CD4-positive, alpha-beta T cell (primary cell): ENCODE measurements at regions of chr4 and their contacts with region 1.

Region 1: GRCh38 chr4:88823058-88823919 is 125.7 kb upstream of the NAP1L5 start:
- DNase-seq: peak; percentile 36 to 94 (median 61)
- ATAC-seq: peak; percentile 92
- H3K4me3 ChIP-seq: peak overlapping the region; percentile 61
- H3K4me3 Mint-ChIP-seq: peak overlapping the region; percentile 91
- H3K27ac ChIP-seq: peak overlapping the region; percentile 78 to 90
- H3K27ac Mint-ChIP-seq: peak overlapping the region; percentile 97
- H3K4me1 ChIP-seq: peaks cover 6% of the 10 kb centered on the region
- H3K4me1 Mint-ChIP-seq: peaks cover 50% of the 10 kb centered on the region
- H3K27me3 ChIP-seq: no peaks in the 10 kb centered on the region
- H3K27me3 Mint-ChIP-seq: no peaks in the 10 kb centered on the region
- CTCF ChIP-seq: no peak

Region 2: DNA sequence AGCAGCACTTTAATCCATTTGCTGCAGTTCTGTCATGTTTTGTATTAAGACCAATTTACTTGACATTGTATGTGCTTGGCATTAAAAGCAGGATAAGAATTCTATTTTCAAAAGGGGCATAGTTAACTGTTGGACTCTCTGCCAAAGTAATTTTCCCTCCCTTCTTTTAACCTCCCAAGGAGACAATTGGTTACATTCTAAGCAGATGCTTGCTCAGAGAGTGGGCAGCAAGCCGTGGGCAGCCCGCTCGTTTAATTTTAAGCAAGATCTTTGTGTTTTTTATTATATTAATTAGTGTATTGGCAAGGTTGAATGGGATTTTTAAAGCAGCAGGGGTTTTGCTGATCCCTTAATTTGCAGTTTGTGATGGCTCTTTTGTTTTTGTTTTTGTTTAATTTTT is 1565.8 kb before region 1 on chr4:
- CTCF ChIA-PET with region 1: no interaction called
- POLR2A ChIA-PET with region 1: no interaction called
- intact Hi-C with region 1: no loop called
- DNase-seq: no peak
- ATAC-seq: no peak
- H3K4me3 ChIP-seq: no peak overlapping the region
- H3K4me3 Mint-ChIP-seq: no peak overlapping the region
- H3K27ac ChIP-seq: no peak overlapping the region
- H3K27ac Mint-ChIP-seq: no peak overlapping the region
- H3K4me1 ChIP-seq: no peaks in the 10 kb centered on the region
- H3K4me1 Mint-ChIP-seq: no peaks in the 10 kb centered on the region
- H3K27me3 ChIP-seq: peaks cover 0 to 2% of the 10 kb centered on the region in 2 experiments
- H3K27me3 Mint-ChIP-seq: peaks cover 6% of the 10 kb centered on the region
- CTCF ChIP-seq: no peak

Region 3: DNA sequence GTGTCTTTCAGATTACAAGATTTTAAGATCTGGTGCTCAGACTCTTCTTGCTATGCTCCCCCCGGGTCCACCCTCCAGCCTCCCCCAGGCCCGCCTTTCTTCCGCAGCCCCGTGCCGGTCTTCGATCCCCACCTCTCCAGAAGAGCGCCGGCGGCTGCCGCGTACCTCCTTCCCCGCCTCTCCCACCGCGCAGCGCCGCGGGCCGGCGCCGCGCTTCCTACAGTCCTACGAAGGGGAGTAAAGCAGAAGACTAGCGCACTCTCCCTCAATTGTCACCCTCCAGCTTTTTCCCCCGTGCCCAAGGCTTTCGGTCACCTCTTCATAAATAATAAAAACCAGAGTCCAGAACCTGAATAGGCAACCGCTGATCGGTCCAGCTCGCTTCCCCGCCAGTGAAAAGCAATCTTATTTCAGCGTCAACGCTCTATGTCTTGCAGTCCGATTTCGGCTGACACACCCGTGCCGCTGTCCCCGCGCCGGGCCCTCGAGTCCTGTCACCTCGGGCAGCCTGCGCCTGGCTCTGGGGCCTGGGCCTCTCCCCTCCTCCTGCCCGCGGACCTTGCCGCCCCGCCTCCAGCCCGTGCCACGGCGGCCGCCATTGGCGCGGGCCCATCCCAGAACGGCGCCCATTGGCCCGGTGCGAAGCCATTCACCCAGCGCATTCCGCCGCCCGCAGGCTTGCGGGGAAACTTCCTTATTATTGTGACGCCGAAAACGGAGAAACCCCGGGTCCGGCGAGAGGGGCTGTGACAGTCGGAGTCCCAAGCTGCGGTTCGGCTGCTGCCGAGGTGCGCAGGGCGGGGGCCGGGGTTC is 231.3 kb before region 1 on chr4 and contains the start of gene HERC3:
- CTCF ChIA-PET with region 1: no interaction called
- POLR2A ChIA-PET with region 1: no interaction called
- intact Hi-C with region 1: loop called in 1 of 2 experiments (anchors 5 kb)
- DNase-seq: peak; percentile 76 to 95 (median 86)
- ATAC-seq: peak; percentile 84
- H3K4me3 ChIP-seq: peak within 1 kb of the TSS; percentile 96
- H3K4me3 Mint-ChIP-seq: peak within 1 kb of the TSS; percentile 100
- H3K27ac ChIP-seq: peak within 1 kb of the TSS; percentile 83 to 93
- H3K27ac Mint-ChIP-seq: peak within 1 kb of the TSS; percentile 99
- H3K4me1 ChIP-seq: peaks cover 23% of the 10 kb centered on the region
- H3K4me1 Mint-ChIP-seq: peaks cover 60% of the 10 kb centered on the region
- H3K27me3 ChIP-seq: no peaks in the 10 kb centered on the region
- H3K27me3 Mint-ChIP-seq: no peaks in the 10 kb centered on the region
- CTCF ChIP-seq: no peak
- total RNA-seq, gene HERC3: 63.1 to 66.4 TPM

Region 4: DNA sequence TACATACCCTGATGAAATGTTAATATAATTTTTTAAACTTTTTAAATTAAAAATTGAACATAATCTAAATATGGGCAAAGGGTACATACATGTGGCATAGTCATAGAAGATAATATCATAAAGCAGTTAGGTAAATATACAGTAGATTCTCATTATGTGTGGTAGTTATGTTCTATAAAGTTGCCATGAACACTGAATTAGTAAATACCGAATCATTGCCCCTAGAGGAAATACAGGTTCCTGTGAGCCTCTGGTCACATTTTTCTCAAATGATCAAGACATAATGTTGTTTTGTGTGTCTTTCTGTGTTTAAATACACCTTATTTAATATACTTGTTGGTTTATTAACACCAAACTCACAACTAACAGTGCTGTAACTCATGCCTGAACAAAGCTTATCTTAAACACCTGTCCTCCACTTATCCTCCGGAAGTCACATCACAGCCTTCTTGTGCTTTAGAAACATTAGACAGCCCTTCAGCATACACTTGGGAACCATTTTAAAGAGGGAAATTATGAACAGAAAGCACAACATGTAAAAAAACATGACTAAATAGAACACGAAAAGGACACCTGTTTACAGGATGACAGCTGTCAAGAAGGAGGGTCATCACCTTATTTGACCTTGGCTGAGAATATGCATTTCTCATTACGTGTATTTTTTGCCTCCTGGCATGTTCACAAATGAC is 43.7 kb after region 1 on chr4:
- CTCF ChIA-PET with region 1: no interaction called
- POLR2A ChIA-PET with region 1: no interaction called
- intact Hi-C with region 1: no loop called
- DNase-seq: no peak
- ATAC-seq: no peak
- H3K4me3 ChIP-seq: no peak overlapping the region
- H3K4me3 Mint-ChIP-seq: no peak overlapping the region
- H3K27ac ChIP-seq: no peak overlapping the region
- H3K27ac Mint-ChIP-seq: no peak overlapping the region
- H3K4me1 ChIP-seq: no peaks in the 10 kb centered on the region
- H3K4me1 Mint-ChIP-seq: no peaks in the 10 kb centered on the region
- H3K27me3 ChIP-seq: no peaks in the 10 kb centered on the region
- H3K27me3 Mint-ChIP-seq: no peaks in the 10 kb centered on the region
- CTCF ChIP-seq: no peak

Region 5: GRCh38 chr4:88939697-88940096 is 116.4 kb after region 1 on chr4:
- CTCF ChIA-PET with region 1: interaction called, 3 read pairs
- POLR2A ChIA-PET with region 1: interaction called, 4 read pairs
- intact Hi-C with region 1: loop called in 1 of 2 experiments (anchors 1 kb)
- DNase-seq: no peak
- ATAC-seq: no peak
- H3K4me3 ChIP-seq: no peak overlapping the region
- H3K4me3 Mint-ChIP-seq: no peak overlapping the region
- H3K27ac ChIP-seq: no peak overlapping the region
- H3K27ac Mint-ChIP-seq: peak overlapping the region; percentile 87
- H3K4me1 ChIP-seq: peaks cover 12% of the 10 kb centered on the region
- H3K4me1 Mint-ChIP-seq: peaks cover 39% of the 10 kb centered on the region
- H3K27me3 ChIP-seq: no peaks in the 10 kb centered on the region
- H3K27me3 Mint-ChIP-seq: no peaks in the 10 kb centered on the region
- CTCF ChIP-seq: no peak

Region 6: GRCh38 chr4:89024051-89024675 is 200.9 kb after region 1 on chr4:
- CTCF ChIA-PET with region 1: interaction called, 111 read pairs
- POLR2A ChIA-PET with region 1: interaction called, 14 read pairs
- intact Hi-C with region 1: loop called (anchors 1 kb)
- DNase-seq: peak in 12 of 14 experiments; percentile 15 to 86 (median 42)
- ATAC-seq: peak; percentile 100
- H3K4me3 ChIP-seq: no peak overlapping the region
- H3K4me3 Mint-ChIP-seq: no peak overlapping the region
- H3K27ac ChIP-seq: no peak overlapping the region
- H3K27ac Mint-ChIP-seq: no peak overlapping the region
- H3K4me1 ChIP-seq: peaks cover 3% of the 10 kb centered on the region
- H3K4me1 Mint-ChIP-seq: peaks cover 2% of the 10 kb centered on the region
- H3K27me3 ChIP-seq: no peaks in the 10 kb centered on the region
- H3K27me3 Mint-ChIP-seq: no peaks in the 10 kb centered on the region
- CTCF ChIP-seq: peak; percentile 83

Region 7: GRCh38 chr4:89434364-89434988 is 611.2 kb after region 1 on chr4:
- CTCF ChIA-PET with region 1: no interaction called
- POLR2A ChIA-PET with region 1: no interaction called
- intact Hi-C with region 1: loop called in 1 of 2 experiments (anchors 10 kb)
- DNase-seq: peak in 3 of 14 experiments; percentile 63 to 72 (median 71)
- ATAC-seq: peak; percentile 77
- H3K4me3 ChIP-seq: no peak overlapping the region
- H3K4me3 Mint-ChIP-seq: no peak overlapping the region
- H3K27ac ChIP-seq: no peak overlapping the region
- H3K27ac Mint-ChIP-seq: no peak overlapping the region
- H3K4me1 ChIP-seq: peaks cover 7% of the 10 kb centered on the region
- H3K4me1 Mint-ChIP-seq: peaks cover 12% of the 10 kb centered on the region
- H3K27me3 ChIP-seq: no peaks in the 10 kb centered on the region
- H3K27me3 Mint-ChIP-seq: no peaks in the 10 kb centered on the region
- CTCF ChIP-seq: peak; percentile 90